Activated CD4-positive, alpha-beta memory T cell treated with anti-CD3 and anti-CD28 coated beads for 36 hours (primary cell): ENCODE measurements at regions of chr17 and their contacts with region 1.

Region 1: GRCh38 chr17:67431249-67432048 is 54.4 kb downstream of the PITPNC1 start:
- DNase-seq: peak; percentile 36
- H3K4me3 Mint-ChIP-seq: peak overlapping the region; percentile 58
- H3K27ac Mint-ChIP-seq: peak overlapping the region; percentile 89
- H3K4me1 Mint-ChIP-seq: peaks cover 69% of the 10 kb centered on the region
- H3K27me3 Mint-ChIP-seq: no peaks in the 10 kb centered on the region

Region 2: GRCh38 chr17:67452681-67453554 is 21.5 kb after region 1 on chr17:
- CTCF ChIA-PET with region 1: interaction called, 5 read pairs
- POLR2A ChIA-PET with region 1: interaction called, 16 read pairs
- intact Hi-C with region 1: loop called (anchors 1 kb)
- DNase-seq: peak; percentile 63
- H3K4me3 Mint-ChIP-seq: peak overlapping the region; percentile 55
- H3K27ac Mint-ChIP-seq: peak overlapping the region; percentile 95
- H3K4me1 Mint-ChIP-seq: peaks cover 83% of the 10 kb centered on the region
- H3K27me3 Mint-ChIP-seq: no peaks in the 10 kb centered on the region

Region 3: DNA sequence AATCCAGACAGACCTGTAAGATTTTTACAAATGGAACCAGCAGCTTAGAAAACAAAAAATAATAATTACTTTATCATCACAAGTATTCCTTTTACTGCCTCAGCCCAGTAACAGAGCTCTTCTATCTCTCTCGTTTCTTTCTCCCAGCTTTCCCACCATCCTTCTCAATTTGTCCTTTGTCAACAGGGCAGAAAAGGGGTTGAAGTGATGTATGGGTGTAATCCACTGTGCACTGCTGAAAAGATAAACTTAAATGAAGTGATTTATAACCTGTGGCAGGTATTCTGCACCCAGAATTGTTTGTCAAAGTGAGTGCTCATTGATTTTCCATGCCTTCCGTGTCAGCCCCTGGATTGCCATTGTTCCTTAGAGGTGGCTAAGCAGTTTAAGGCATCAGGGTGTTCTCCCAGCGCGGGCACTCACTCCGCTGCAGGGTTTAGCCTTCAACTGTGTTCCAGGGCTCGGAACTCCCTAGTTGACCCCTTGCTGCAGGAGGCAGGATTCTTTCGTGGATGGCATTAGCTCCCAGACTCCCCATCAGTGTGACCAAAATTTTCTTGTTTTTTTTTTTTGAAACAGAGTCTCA is 28.5 kb after region 1 on chr17:
- CTCF ChIA-PET with region 1: interaction called, 5 read pairs
- POLR2A ChIA-PET with region 1: no interaction called
- intact Hi-C with region 1: loop called (anchors 2 kb)
- DNase-seq: no peak
- H3K4me3 Mint-ChIP-seq: no peak overlapping the region
- H3K27ac Mint-ChIP-seq: no peak overlapping the region
- H3K4me1 Mint-ChIP-seq: peaks cover 60% of the 10 kb centered on the region
- H3K27me3 Mint-ChIP-seq: no peaks in the 10 kb centered on the region